Heart left ventricle (tissue), 16 donors: ENCODE measurements at regions of chr12 and their contacts with region 1.

Region 1: GRCh38 chr12:116123451-116124258 is 153.8 kb downstream of the MED13L start:
- DNase-seq: peak in 4 of 5 donors; percentile 18 to 37 (median 32)
- ATAC-seq: peak; percentile 62 to 87 (median 82)
- H3K4me3 ChIP-seq: peak overlapping the region in 8 of 12 donors; percentile 14 to 41 (median 22)
- H3K27ac ChIP-seq: peak overlapping the region in 6 of 12 donors; percentile 0 to 39 (median 24)
- H3K4me1 ChIP-seq: peaks cover 6 to 90% (median 57%) of the 10 kb centered on the region in 12 donors
- H3K27me3 ChIP-seq: no peaks in the 10 kb centered on the region
- CTCF ChIP-seq: no peak
- POLR2A ChIP-seq: no peak

Region 2: DNA sequence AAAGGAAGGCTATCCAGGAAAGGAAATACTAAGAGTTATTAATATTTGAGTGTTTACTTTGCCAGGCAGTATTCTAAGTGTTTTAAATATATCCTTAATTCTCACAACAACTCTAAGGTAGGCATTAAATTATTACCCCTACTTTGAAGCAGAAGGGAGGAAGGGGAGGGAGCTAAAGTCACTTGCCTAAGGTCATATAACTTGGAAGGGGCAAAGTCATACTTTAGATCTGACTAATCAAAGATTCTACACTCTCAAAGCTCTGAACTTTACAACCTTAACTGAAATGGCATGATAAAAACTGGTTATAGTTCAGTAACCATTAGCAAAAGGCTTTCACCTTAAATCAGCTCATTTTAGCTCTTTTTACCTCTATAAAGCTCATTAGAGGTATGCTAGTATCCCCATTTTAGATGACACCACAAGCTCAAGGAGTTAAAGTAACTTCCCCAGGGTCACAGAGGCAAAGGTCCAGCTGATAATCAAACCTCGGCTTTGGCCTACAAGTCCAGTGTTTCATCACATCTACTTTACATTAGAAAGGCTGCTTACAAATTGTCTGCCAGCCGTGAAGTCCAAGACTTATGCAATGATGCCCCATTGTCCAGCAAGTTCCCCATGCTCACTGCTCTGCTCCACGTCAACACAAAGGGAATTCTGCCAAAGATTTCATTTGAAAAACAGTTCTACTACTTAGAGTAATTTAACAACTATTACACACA is 70.0 kb before region 1 on chr12:
- intact Hi-C with region 1: loop called in 1 of 10 experiments (anchors 10 kb)
- DNase-seq: peak in 2 of 5 donors; percentile 33 to 35
- ATAC-seq: peak in 3 of 4 donors; percentile 62 to 87 (median 78)
- H3K4me3 ChIP-seq: no peak overlapping the region
- H3K27ac ChIP-seq: peak overlapping the region in 6 of 12 donors; percentile 10 to 53 (median 22)
- H3K4me1 ChIP-seq: peaks cover 9 to 72% (median 52%) of the 10 kb centered on the region in 12 donors
- H3K27me3 ChIP-seq: no peaks in the 10 kb centered on the region
- CTCF ChIP-seq: no peak
- POLR2A ChIP-seq: no peak

Region 3: GRCh38 chr12:116066381-116067230 is 57.0 kb before region 1 on chr12:
- intact Hi-C with region 1: loop called in 1 of 10 experiments (anchors 10 kb)
- DNase-seq: peak in 4 of 5 donors; percentile 27 to 51 (median 34)
- ATAC-seq: no peak
- H3K4me3 ChIP-seq: no peak overlapping the region
- H3K27ac ChIP-seq: no peak overlapping the region
- H3K4me1 ChIP-seq: peaks cover 7 to 66% (median 41%) of the 10 kb centered on the region in 12 donors
- H3K27me3 ChIP-seq: no peaks in the 10 kb centered on the region
- CTCF ChIP-seq: peak; percentile 33 to 70 (median 54)
- POLR2A ChIP-seq: no peak

Region 4: DNA sequence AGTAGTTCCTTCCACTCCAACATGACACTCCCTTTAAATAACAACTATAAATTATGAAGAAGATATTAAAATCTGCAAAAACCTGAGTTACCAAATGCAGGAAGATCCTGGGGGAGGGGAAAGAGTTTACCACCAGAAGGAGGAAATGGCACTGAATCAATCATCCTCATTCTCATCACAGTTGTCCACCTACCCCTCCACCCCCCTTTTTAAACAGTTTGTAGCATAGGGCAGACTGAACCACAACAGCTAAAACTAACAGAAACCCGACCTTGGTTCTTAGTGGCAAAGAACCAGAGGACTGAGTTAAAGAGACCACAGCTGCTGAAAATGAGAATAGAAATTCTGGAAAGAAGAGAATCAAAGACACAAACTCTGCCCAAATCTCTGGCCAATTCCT is 35.7 kb before region 1 on chr12:
- intact Hi-C with region 1: loop called in 1 of 10 experiments (anchors 5 kb)
- DNase-seq: no peak
- ATAC-seq: no peak
- H3K4me3 ChIP-seq: no peak overlapping the region
- H3K27ac ChIP-seq: no peak overlapping the region
- H3K4me1 ChIP-seq: peaks cover 0 to 13% (median 0%) of the 10 kb centered on the region in 12 donors
- H3K27me3 ChIP-seq: no peaks in the 10 kb centered on the region
- CTCF ChIP-seq: no peak
- POLR2A ChIP-seq: no peak

Region 5: GRCh38 chr12:116277393-116278278 is 154.0 kb after region 1 on chr12 and contains the start of gene MED13L:
- intact Hi-C with region 1: no loop called
- DNase-seq: peak; percentile 90 to 96 (median 93)
- ATAC-seq: peak; percentile 88 to 97 (median 93)
- H3K4me3 ChIP-seq: peak within 1 kb of the TSS; percentile 71 to 95 (median 88)
- H3K27ac ChIP-seq: peak within 1 kb of the TSS; percentile 90 to 99 (median 95)
- H3K4me1 ChIP-seq: peaks cover 0 to 63% (median 29%) of the 10 kb centered on the region in 12 donors
- H3K27me3 ChIP-seq: no peaks in the 10 kb centered on the region
- CTCF ChIP-seq: peak in 10 of 12 donors; percentile 13 to 67 (median 51)
- POLR2A ChIP-seq: peak in 1 of 2 donors; percentile 38
- total RNA-seq, gene MED13L: 48.6 to 84.1 (median 68.7) TPM